Ascending aorta (tissue), 2 donors: ENCODE measurements at regions of chr3 and their contacts with region 1.

Region 1: GRCh38 chr3:176939022-176939817 is 258.1 kb downstream of the TBL1XR1 start:
- DNase-seq: no peak
- H3K4me3 ChIP-seq: no peak overlapping the region
- H3K27ac ChIP-seq: no peak overlapping the region
- H3K4me1 ChIP-seq: peaks cover 0 to 2% of the 10 kb centered on the region in 2 donors
- H3K27me3 ChIP-seq: no peaks in the 10 kb centered on the region
- CTCF ChIP-seq: peak; percentile 67 to 80 (median 70)

Region 2: DNA sequence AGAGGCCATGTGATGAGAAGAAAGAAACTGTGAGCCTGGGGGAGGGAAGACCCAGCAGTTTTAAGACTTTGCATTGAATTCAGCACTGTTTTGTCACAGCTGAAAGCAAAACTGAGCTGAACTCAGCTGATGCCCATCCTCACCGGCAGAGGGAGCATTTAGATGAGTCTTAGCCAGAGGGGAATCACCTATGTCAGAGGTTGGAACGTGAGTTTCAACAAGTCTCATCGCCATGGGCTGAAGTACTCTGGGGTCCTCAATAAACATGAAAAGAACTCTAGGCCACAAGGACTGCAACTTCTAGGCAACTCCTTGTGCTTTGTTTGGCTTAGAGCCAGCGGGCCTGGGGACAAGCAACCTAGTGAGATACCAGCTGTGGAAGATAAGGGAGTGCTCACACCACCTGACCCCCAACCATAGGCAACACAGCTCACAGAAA is 66.4 kb before region 1 on chr3:
- intact Hi-C with region 1: loop called (anchors 1 kb)
- DNase-seq: no peak
- H3K4me3 ChIP-seq: no peak overlapping the region
- H3K27ac ChIP-seq: no peak overlapping the region
- H3K4me1 ChIP-seq: no peaks in the 10 kb centered on the region
- H3K27me3 ChIP-seq: no peaks in the 10 kb centered on the region
- CTCF ChIP-seq: peak; percentile 54 to 68 (median 63)